ENCODE measurements at regions of chr17 and their contacts with region 1.

Region 1: GRCh38 chr17:75412455-75413317 is 7.2 kb upstream of the GRB2 start:
- DNase-seq: peak; percentile 81
- H3K4me3 ChIP-seq: peak overlapping the region; percentile 3 to 35; a peak in 3 of 4 replicates
- H3K27ac ChIP-seq: no peak overlapping the region
- H3K4me1 ChIP-seq: no peaks in the 10 kb centered on the region
- H3K27me3 ChIP-seq: peaks cover 22% of the 10 kb centered on the region
- CTCF ChIP-seq: peak; percentile 92
- EP300 ChIP-seq: no peak
- RAD21 ChIP-seq: peak; percentile 96

Region 2: GRCh38 chr17:75238684-75239191 is 173.9 kb before region 1 on chr17:
- CTCF ChIA-PET with region 1: interaction called, 28 read pairs
- POLR2A ChIA-PET with region 1: no interaction called
- DNase-seq: peak; percentile 90
- H3K4me3 ChIP-seq: no peak overlapping the region
- H3K27ac ChIP-seq: no peak overlapping the region
- H3K4me1 ChIP-seq: no peaks in the 10 kb centered on the region; a peak in 1 of 4 replicates
- H3K27me3 ChIP-seq: no peaks in the 10 kb centered on the region
- CTCF ChIP-seq: peak; percentile 98
- EP300 ChIP-seq: no peak
- RAD21 ChIP-seq: peak; percentile 54

Region 3: DNA sequence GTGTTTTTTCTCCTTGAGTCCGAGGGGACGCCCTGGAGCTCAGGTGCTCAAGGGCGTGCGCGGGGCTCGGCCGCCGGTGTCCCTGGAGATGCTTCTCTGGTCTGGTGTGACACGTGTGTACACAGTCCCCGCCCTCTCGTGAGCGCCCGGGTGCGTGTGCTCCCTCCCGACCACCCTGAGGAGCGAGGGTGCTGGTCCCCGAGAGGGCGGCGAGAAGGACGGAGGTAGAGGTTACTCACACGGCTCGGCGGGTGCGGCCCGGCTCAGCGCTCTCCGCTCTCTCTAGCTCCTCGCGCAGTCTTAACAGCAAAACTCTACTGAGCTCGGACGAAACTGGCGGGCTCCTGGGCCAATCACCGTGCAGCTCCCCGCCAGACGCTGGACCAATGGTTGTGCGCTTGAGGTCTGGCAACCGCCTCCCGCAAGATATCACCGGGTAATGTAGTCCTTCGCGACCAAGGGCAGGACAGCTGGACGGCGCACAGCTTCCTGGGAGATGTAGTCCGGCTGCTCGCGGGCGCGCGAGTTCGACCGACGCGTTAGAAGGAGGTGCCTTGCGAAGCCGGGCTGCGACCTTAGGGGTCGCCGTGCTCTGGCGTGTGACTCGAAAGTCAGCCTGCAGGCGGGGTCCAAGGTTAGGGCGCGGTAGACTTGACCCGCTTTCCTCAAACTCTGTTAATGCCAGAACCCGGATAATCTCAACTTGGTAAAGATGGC is 123.4 kb before region 1 on chr17 and contains the start of gene SLC25A19:
- CTCF ChIA-PET with region 1: interaction called, 34 read pairs
- POLR2A ChIA-PET with region 1: no interaction called
- DNase-seq: peak; percentile 99
- H3K4me3 ChIP-seq: peak within 1 kb of the TSS; percentile 68 to 80
- H3K27ac ChIP-seq: peak within 1 kb of the TSS; percentile 73 to 80
- H3K4me1 ChIP-seq: peaks cover 4 to 5% of the 10 kb centered on the region in 2 experiments; a peak in 2 of 4 replicates
- H3K27me3 ChIP-seq: no peaks in the 10 kb centered on the region
- CTCF ChIP-seq: peak; percentile 26; the same call in 1 of the 2 replicates
- EP300 ChIP-seq: no peak
- RAD21 ChIP-seq: 0 out of 2 replicates have a peak, but pooled peaks have one; percentile 34
- polyA plus RNA-seq, gene SLC25A19: 11.7 and 13.2 TPM in 2 replicates

Region 4: GRCh38 chr17:75331671-75332070 is 81.0 kb before region 1 on chr17:
- CTCF ChIA-PET with region 1: interaction called, 34 read pairs
- POLR2A ChIA-PET with region 1: no interaction called
- DNase-seq: no peak
- H3K4me3 ChIP-seq: no peak overlapping the region
- H3K27ac ChIP-seq: no peak overlapping the region
- H3K4me1 ChIP-seq: peaks cover 1 to 2% of the 10 kb centered on the region in 2 experiments; a peak in 2 of 4 replicates
- H3K27me3 ChIP-seq: no peaks in the 10 kb centered on the region
- CTCF ChIP-seq: no peak
- EP300 ChIP-seq: no peak
- RAD21 ChIP-seq: no peak

Region 5: DNA sequence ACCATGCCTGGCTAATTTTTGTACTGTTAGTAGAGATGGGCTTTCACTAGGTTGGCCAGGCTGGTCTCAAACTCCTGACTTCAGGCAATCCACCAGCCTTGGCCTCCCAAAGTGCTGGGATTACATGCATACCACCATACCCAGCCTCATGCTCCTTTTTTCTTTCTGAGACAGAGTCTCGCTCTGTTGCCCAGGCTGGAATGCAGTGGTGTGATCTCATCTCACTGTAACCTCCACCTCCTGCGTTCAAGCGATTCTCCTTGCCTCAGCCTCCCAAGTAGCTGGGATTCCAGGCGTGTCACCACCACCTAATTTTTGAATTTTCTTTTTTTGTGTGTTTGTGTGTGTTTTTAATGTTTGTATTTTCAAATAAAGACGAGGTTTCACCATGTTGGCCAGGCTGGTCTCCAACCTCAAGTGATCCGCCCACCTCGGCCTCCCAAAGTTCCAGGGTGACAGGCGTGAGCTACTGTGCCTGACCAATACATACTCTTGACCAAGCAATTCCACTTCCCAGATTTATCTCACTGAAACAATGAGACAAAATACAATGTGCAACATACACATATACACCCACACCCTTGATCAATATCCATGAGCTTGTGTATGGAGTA is 12.3 kb before region 1 on chr17:
- CTCF ChIA-PET with region 1: interaction called, 53 read pairs
- POLR2A ChIA-PET with region 1: no interaction called
- DNase-seq: no peak
- H3K4me3 ChIP-seq: no peak overlapping the region
- H3K27ac ChIP-seq: no peak overlapping the region
- H3K4me1 ChIP-seq: peaks cover 2 to 4% of the 10 kb centered on the region in 2 experiments; a peak in 3 of 4 replicates
- H3K27me3 ChIP-seq: no peaks in the 10 kb centered on the region
- CTCF ChIP-seq: no peak
- EP300 ChIP-seq: no peak
- RAD21 ChIP-seq: no peak

Region 6: DNA sequence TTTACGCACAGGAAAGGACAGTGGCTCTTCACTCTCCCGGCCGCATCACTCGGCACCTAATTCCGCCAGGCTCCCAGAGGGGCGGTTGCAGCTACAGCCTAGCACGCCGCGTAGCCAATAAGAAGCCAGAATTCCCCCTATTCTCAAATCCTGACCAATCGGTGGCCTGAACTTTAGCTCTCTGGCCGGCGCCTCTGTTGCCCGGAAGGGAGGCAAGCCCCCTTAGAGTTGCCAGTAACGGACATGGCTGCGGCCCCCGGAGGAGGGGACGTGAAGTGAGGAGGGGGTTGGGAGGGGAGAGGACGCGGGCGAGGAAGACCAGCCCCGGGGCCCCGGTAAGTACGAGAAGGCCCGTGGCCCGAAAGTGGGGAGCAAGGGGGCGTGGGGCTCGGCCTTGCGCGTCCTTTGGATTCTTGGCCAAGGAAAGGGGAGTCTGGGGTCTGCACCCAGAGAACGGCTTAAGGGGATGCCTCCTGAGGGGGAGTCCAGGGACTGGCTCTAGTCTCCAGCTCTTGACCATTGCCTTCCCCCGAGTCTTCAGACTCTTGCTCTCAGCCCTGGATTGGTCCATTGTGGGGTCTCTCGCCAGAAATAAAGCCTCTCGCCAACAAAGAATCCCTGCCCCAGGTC is 43.8 kb after region 1 on chr17 and contains the start of gene TMEM94:
- CTCF ChIA-PET with region 1: interaction called, 11 read pairs
- POLR2A ChIA-PET with region 1: no interaction called
- DNase-seq: peak; percentile 98
- H3K4me3 ChIP-seq: peak within 1 kb of the TSS; percentile 74 to 82
- H3K27ac ChIP-seq: peak within 1 kb of the TSS; percentile 90 to 94
- H3K4me1 ChIP-seq: peaks cover 0 to 15% of the 10 kb centered on the region in 2 experiments; a peak in 3 of 4 replicates
- H3K27me3 ChIP-seq: no peaks in the 10 kb centered on the region
- CTCF ChIP-seq: no peak
- EP300 ChIP-seq: no peak
- RAD21 ChIP-seq: no peak
- polyA plus RNA-seq, gene TMEM94: 68.0 and 89.9 TPM in 2 replicates

Region 7: DNA sequence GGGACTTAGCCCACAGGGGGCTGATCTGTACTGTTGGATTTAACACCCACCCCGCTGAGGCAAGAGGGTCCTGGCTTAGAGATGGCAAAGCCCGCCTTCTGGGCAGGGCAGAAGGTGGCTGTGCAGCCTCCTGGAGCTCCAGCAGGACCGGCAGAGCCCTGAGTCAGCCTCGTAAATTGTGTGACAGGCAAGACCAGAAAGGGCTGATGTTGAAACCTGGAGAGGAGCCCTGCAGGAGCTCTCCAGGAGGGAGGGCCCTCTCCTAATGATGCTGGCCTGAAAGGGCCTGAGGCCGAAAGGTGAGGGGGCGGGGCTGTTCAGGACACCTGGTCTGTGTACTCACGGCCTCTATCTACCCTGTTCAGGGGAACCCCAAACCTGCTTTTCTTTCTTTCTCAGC is 152.4 kb after region 1 on chr17:
- CTCF ChIA-PET with region 1: no interaction called
- POLR2A ChIA-PET with region 1: no interaction called
- DNase-seq: no peak
- H3K4me3 ChIP-seq: no peak overlapping the region
- H3K27ac ChIP-seq: no peak overlapping the region
- H3K4me1 ChIP-seq: no peaks in the 10 kb centered on the region
- H3K27me3 ChIP-seq: no peaks in the 10 kb centered on the region
- CTCF ChIP-seq: no peak
- EP300 ChIP-seq: no peak
- RAD21 ChIP-seq: no peak

Region 8: GRCh38 chr17:75701171-75701687 is 288.5 kb after region 1 on chr17:
- CTCF ChIA-PET with region 1: no interaction called
- POLR2A ChIA-PET with region 1: no interaction called
- DNase-seq: no peak
- H3K4me3 ChIP-seq: no peak overlapping the region
- H3K27ac ChIP-seq: peak overlapping the region; percentile 64 to 76
- H3K4me1 ChIP-seq: peaks cover 14 to 20% of the 10 kb centered on the region in 2 experiments; a peak in 3 of 4 replicates
- H3K27me3 ChIP-seq: no peaks in the 10 kb centered on the region
- CTCF ChIP-seq: no peak
- EP300 ChIP-seq: no peak
- RAD21 ChIP-seq: no peak